ENCODE measurements at regions of chr10 and their contacts with region 1.

Region 1: DNA sequence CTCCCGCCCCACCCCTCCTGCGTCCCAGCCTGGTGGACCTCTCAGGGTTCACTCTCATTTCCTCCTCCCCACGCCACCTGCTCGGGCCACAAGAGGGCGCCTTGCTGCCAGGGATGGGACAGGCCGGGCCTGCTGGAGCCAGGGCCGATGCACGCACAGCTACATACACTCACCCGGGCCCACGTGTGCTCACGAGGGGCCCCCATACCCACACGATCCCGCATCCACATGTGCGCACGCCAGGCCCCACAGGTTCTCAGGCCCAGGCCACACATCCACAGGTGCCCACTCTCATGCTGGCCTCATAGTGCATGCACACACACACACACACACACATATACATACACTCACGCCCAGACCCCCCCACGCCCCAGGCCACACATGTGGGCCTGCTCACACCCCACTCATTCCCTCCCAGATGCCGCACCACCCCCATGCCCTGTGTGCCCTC is 68.6 kb downstream of the LHPP start:
- DNase-seq: no peak
- ATAC-seq: peak; percentile 96
- H3K4me3 ChIP-seq: no peak overlapping the region
- H3K27ac ChIP-seq: no peak overlapping the region
- H3K4me1 ChIP-seq: no peaks in the 10 kb centered on the region
- H3K27me3 ChIP-seq: no peaks in the 10 kb centered on the region
- CTCF ChIP-seq: peak; percentile 99

Region 2: DNA sequence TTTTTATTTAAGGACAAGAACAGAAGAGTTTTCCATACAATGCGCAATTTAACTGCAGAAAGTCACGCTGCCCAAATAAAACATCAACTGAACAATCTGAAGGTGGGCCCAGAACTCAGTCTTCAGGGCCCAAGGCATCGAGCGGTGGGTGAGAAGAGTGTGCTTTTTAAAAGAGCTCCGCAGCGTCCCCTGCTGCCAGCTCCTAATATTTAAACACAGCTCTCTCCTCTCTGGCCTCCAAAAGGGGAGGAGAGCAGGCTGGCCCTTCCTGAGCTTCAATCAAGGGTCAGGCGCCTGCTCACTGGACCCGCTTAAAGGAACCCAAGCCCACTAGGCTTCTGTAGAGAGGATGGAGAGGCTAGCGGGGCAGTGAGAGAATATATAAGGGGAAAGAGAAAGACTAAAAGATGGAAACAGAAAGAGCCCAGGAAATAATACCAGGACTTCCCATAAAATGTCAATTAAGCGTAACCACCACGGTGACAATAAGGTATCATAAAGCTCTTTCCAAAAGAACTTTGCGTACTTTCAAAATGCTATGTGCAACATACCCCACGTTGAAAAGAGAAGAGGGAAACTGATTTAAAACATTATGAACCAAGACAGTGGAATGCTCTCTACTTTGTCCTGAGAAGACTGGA is 211.2 kb after region 1 on chr10:
- CTCF ChIA-PET with region 1: interaction called, 23 read pairs
- POLR2A ChIA-PET with region 1: no interaction called
- in situ Hi-C with region 1: no loop called
- intact Hi-C with region 1: loop called (anchors 2 kb)
- DNase-seq: no peak
- ATAC-seq: peak; percentile 66
- H3K4me3 ChIP-seq: peak overlapping the region; percentile 33 to 77
- H3K27ac ChIP-seq: peak overlapping the region; percentile 86
- H3K4me1 ChIP-seq: peaks cover 76% of the 10 kb centered on the region
- H3K27me3 ChIP-seq: no peaks in the 10 kb centered on the region
- CTCF ChIP-seq: peak; percentile 99

Region 3: GRCh38 chr10:124827474-124827873 is 297.2 kb after region 1 on chr10:
- CTCF ChIA-PET with region 1: no interaction called
- POLR2A ChIA-PET with region 1: no interaction called
- in situ Hi-C with region 1: no loop called
- intact Hi-C with region 1: loop called (anchors 10 kb)
- DNase-seq: no peak
- ATAC-seq: no peak
- H3K4me3 ChIP-seq: no peak overlapping the region
- H3K27ac ChIP-seq: no peak overlapping the region
- H3K4me1 ChIP-seq: no peaks in the 10 kb centered on the region
- H3K27me3 ChIP-seq: no peaks in the 10 kb centered on the region
- CTCF ChIP-seq: peak; percentile 74; the same call in 1 of the 2 replicates

Measured in Panc1 (cell line).